ENCODE measurements at regions of chr1 and their contacts with region 1.

Region 1: DNA sequence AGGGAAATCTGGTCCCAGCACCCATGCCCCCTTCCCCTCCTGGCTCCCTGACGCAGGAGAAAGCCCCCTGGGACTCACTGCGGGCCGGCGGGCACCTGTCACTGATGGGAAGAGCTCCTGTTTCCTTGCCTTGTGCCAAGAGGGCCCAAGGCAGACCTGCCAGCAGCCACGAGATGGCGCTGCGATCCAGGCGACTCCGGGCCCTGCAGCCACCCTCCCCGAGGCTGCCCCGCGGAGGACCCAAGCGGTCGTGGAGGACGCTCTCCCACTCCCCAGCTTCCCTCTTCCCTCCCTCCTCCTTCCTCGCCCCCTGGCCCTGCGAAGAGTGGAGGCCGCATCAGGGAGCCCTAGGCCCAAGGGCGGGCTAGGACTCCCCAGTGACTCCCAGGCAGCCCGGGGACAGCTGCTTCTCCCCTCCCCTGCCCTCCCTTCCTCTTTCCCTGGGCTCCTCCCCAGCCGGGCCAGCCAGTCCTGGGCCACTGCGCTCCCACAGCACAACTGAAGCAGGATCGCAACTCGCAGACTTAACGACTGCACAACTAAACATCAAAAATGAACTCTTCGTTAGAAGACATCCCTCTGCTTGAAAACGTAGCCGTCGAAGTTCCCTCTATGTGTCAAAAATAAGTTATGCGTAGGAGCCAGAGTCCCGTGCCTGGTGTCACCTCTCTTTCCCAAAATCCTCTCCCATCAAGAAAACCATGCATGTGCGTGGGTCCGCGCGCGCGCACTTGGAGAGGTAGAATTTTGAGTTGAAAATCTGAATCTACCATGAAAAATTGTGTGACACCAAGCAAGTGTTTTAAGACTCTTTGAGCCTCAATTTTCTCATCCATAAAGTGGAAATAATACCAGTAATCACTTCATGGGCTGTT is 34.2 kb downstream of the BATF3 start:
- DNase-seq: peak in 1 of 2 experiments; percentile 95
- H3K4me3 ChIP-seq: peak overlapping the region; percentile 34 to 77 (median 62)
- H3K27ac ChIP-seq: no peak overlapping the region
- H3K4me1 ChIP-seq: no peaks in the 10 kb centered on the region; a peak in 1 of 7 replicates
- H3K27me3 ChIP-seq: peaks cover 0 to 9% (median 5%) of the 10 kb centered on the region in 4 experiments; a peak in 4 of 7 replicates
- CTCF ChIP-seq: peak; percentile 95 to 96 (median 96)
- EP300 ChIP-seq: no peak
- POLR2A ChIP-seq: no peak
- RAD21 ChIP-seq: peak; percentile 90 to 94

Region 2: DNA sequence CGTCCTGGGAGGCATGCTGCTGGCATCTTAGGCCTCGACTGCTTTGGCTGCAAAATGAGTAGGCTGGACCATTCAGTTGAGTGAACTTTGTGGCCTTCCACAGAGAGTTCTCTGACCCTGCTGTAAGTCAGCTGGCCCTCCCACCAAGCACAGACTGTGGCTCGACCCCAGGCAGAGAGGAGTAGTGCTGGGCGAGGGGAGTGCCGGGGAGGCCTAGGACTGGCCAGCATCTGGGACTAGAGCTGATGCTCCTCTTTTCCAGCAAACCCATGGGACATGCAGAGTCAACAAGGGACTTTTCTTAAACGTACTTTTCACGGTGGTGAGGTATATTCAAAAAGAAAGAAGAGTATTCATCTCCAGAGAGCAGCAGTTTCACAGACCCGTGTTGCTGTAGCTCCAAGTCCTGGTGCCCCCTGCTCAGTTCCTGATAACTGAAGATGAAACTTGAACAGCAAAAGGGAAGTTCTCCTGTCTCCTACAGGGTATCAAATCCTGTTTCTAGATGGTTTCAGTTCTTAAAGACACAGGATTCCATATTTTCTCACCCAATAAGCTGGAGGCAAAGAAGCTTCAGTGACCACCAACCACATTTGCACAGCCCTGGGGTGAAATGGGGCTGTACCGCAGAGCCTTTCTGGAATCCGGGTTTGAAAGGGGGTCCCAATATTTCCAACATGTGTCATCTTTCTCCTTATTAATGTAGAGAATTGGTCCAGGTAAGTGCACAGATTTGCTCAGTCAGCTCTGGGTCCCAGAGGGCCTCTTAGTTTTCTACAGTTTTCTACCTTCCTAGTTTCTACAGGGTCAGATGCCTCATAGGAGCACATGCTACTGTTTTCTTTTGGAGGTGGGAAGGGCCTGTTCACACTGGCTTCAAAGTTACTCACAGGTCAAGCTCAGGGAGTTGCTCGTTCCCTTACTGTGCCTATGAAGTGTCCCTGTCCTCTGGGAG is 13.3 kb after region 1 on chr1:
- CTCF ChIA-PET with region 1: interaction called, 18 read pairs
- POLR2A ChIA-PET with region 1: no interaction called
- DNase-seq: no peak
- H3K4me3 ChIP-seq: no peak overlapping the region
- H3K27ac ChIP-seq: no peak overlapping the region
- H3K4me1 ChIP-seq: no peaks in the 10 kb centered on the region; a peak in 2 of 7 replicates
- H3K27me3 ChIP-seq: no peaks in the 10 kb centered on the region
- CTCF ChIP-seq: no peak
- EP300 ChIP-seq: no peak
- POLR2A ChIP-seq: no peak
- RAD21 ChIP-seq: no peak

Region 3: GRCh38 chr1:212699104-212699624 is 33.7 kb after region 1 on chr1:
- CTCF ChIA-PET with region 1: interaction called, 27 read pairs
- POLR2A ChIA-PET with region 1: interaction called, 3 read pairs
- DNase-seq: peak; percentile 33 to 84
- H3K4me3 ChIP-seq: peak overlapping the region; percentile 29 to 69 (median 34)
- H3K27ac ChIP-seq: no peak overlapping the region
- H3K4me1 ChIP-seq: peaks cover 5 to 8% (median 7%) of the 10 kb centered on the region in 4 experiments; a peak in 6 of 7 replicates
- H3K27me3 ChIP-seq: peaks cover 31 to 58% (median 47%) of the 10 kb centered on the region in 4 experiments
- CTCF ChIP-seq: peak; percentile 63 to 86 (median 66)
- EP300 ChIP-seq: no peak
- POLR2A ChIP-seq: no peak
- RAD21 ChIP-seq: peak; percentile 47 to 60

Measured in H1 (cell line).